Adrenal gland (tissue), 19 donors: ENCODE measurements at regions of chr2 and their contacts with region 1.

Region 1: DNA sequence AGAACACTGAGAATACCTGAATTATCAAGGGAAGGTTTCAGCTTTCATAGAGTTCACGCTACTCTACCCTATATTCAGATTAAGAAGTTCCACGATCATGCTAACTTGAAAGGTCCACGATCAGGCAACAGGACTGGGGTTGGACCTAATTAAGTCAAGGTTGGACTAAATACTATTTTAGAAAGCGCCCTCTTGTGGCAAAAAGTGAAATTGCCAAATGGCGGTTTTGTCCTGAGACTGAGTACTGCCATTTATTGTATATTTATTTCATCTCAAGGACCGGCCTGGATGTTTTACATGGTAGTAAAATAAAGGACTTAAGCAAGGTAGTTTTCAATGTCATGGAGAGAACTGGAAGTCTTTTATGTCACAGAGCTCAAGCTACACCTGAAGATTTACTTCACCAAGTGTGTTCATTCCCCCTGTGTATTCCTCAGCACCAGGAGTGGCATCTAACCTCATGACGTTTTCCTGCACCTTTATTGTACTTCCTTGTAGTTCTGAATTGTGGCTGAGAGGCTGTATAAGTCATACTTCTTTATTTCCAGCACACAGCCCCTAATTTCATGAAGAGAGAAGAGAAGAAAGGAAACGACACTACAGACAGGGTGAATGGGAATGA is 56.8 kb downstream of the SRD5A2 start:
- DNase-seq: peak in 6 of 7 donors; percentile 31 to 69 (median 54)
- H3K4me3 ChIP-seq: no peak overlapping the region
- H3K27ac ChIP-seq: no peak overlapping the region
- H3K4me1 ChIP-seq: no peaks in the 10 kb centered on the region
- H3K27me3 ChIP-seq: peaks cover 8% of the 10 kb centered on the region
- CTCF ChIP-seq: peak; percentile 42 to 73 (median 55)
- POLR2A ChIP-seq: no peak

Region 2: GRCh38 chr2:30736461-30737325 is 787.3 kb before region 1 on chr2:
- intact Hi-C with region 1: loop called in 1 of 2 experiments (anchors 10 kb)
- DNase-seq: no peak
- H3K4me3 ChIP-seq: no peak overlapping the region
- H3K27ac ChIP-seq: no peak overlapping the region
- H3K4me1 ChIP-seq: no peaks in the 10 kb centered on the region
- H3K27me3 ChIP-seq: no peaks in the 10 kb centered on the region
- CTCF ChIP-seq: no peak
- POLR2A ChIP-seq: no peak

Region 3: GRCh38 chr2:31828891-31829290 is 304.9 kb after region 1 on chr2:
- intact Hi-C with region 1: no loop called
- DNase-seq: no peak
- H3K4me3 ChIP-seq: no peak overlapping the region
- H3K27ac ChIP-seq: no peak overlapping the region
- H3K4me1 ChIP-seq: no peaks in the 10 kb centered on the region
- H3K27me3 ChIP-seq: no peaks in the 10 kb centered on the region
- CTCF ChIP-seq: no peak
- POLR2A ChIP-seq: no peak